Common myeloid progenitor, CD34-positive (primary cell): ENCODE measurements at regions of chrX and their contacts with region 1.

Region 1: DNA sequence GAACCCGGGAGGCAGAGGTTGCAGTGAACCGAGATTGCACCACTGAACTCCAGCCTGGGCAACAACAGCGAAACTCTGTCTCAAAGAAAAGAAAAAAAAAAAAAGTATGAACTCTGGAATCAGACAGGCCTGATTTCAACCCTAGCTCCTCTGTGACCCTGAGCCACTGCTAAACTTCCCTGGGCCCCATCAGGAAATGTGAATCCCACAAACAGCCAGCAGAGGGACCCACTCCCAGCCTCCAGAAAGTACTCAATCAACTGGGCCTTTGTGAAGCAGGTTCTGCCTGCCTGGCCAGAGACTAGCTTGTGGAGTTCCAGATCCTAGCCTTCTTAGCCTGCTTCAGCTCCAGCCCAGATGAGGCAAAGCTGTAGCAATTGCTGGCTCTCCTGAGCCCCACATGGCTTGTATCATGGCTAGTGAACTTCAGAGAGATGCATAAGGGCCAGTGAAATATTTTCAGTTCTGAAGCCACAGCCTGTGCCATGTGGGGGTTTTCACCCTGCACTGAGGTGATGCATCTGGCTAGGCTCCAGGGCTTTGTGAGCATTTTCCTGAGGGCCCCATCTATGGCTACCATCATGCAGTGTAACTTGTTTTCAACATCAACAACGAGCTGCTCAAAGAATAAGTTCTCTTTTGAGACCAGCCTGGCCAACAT is 7.2 kb upstream of the IDS start:
- DNase-seq: peak in 2 of 3 donors; percentile 65 to 66
- H3K4me3 ChIP-seq: no peak overlapping the region
- H3K27ac ChIP-seq: peak overlapping the region in 1 of 2 experiments; percentile 55
- H3K4me1 ChIP-seq: peaks cover 20 to 73% (median 65%) of the 10 kb centered on the region in 4 experiments
- H3K27me3 ChIP-seq: peaks cover 0 to 4% (median 0%) of the 10 kb centered on the region in 5 experiments

Region 2: DNA sequence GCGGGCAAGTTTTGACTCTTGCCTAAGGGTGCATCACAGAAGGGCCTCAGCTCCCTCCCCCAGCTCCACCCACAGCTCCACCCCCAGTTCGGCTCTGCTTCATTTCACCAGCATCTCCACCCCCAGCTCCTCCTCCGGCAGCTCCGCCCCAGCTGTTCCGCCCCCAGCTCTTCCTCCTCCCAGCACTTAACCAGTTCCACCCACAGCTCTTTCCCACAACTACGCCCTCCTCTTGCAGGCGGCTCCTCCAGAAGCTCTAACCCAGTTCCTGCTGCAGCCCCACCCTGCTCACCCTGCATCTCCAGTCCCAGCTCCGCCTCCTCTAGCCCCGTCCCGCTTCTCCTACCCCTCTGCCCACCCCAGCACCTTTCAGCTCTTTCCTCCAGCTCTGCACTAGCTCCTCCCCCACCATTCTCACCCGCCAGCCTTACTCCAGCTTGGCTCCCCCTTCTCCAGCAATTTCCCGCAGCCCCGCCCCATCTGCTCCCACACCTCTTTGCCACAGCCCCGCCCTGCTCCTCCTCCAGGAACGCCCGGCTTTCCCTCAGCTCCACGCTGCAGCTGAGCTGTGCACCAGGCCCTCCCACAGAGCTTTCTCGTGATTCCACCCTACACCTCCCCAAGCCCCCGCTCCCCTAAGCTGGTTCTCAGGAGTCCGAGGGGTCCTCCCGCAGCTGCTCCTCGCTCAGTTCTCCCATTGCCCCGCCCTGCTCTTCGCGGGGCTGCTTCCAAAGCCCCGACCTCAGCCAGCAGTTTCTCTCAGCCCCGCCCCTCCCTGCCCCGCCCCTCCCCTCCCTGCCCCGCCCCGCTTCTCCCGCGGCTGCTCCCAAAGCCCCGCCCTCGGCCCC is 27.2 kb after region 1 on chrX:
- CTCF ChIA-PET with region 1: interaction called, 27 read pairs
- POLR2A ChIA-PET with region 1: interaction called, 3 read pairs
- DNase-seq: peak; percentile 92 to 97 (median 96)
- H3K4me3 ChIP-seq: peak overlapping the region; percentile 40 to 74 (median 63)
- H3K27ac ChIP-seq: peak overlapping the region in 1 of 2 experiments; percentile 34
- H3K4me1 ChIP-seq: peaks cover 0 to 21% (median 10%) of the 10 kb centered on the region in 4 experiments
- H3K27me3 ChIP-seq: no peaks in the 10 kb centered on the region

Region 3: DNA sequence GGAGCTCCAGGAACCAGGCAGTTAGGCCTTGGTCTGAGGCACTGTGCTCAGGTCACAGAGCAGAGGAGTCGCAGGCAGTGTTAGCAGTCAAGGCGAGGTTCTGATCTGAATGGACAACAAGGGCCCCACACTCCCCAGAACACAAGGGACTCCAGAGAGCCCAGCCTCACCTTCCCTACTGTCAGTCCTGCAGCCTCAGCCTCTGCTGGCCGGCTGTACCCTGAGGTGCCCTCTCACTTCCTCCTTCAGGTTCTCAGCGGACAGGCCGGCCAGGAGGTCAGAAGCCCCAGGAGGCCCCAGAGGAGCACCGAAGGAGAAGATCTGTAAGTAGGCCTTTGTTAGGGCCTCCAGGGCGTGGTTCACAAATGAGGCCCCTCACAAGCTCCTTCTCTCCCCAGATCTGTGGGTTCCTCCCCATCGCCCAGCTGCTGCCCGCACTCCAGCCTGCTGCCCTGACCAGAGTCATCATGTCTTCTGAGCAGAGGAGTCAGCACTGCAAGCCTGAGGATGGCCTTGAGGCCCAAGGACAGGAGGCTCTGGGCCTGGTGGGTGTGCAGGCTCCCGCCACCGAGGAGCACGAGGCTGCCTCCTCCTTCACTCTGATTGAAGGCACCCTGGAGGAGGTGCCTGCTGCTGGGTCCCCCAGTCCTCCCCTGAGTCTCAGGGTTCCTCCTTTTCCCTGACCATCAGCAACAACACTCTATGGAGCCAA is 295.5 kb after region 1 on chrX:
- CTCF ChIA-PET with region 1: no interaction called
- POLR2A ChIA-PET with region 1: no interaction called
- DNase-seq: no peak
- H3K4me3 ChIP-seq: no peak overlapping the region
- H3K27ac ChIP-seq: no peak overlapping the region
- H3K4me1 ChIP-seq: no peaks in the 10 kb centered on the region
- H3K27me3 ChIP-seq: peaks cover 0 to 3% (median 0%) of the 10 kb centered on the region in 5 experiments